Dorsolateral prefrontal cortex (tissue), 120 donors: ENCODE measurements at regions of chr11 and their contacts with region 1.

Region 1: DNA sequence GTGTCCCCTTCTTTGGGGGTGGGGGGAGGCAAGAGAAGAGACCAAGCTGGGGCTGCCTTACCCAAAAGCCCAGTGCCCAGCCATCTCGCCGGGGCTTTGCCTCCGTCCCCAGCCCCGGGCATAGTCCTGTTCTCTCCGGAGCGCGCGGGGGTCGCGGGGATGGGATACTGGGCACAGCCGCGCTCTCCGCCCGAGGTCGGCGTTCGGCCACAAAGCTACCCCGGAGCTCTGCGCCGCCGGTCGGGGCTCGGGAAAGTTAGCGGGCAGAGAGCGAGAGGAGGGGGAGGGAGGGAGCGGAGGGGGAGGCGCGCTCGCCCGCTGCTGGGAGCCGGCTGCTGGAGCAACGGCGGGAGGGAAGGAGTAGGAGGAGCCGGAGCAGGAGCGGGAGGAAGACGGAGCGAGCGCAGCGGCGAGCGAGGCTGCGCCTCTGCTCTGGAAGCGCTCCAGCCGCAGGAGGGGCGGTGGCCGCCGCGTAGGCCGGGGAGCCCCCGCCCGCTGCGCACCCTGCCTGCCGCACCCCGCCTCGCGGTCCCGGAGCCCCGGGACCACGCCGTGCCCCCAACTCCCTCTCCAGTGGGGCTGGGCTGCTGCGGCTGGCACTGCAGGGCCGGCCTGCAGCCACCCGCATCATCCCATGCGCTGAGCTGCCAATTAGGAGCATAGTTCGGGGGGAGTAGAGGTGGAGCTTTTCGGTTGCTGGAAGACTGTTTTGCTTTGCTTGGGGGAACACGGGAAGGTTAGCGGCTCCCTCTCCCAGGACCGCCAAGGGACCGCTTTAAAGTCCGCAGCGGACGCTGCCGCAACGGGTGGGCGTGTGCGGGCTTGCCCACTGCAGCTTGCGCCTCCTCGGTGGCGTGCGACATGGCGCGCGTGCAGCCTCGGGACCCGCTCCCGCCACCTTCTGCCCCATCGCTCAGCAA is at the start of gene SCN4B:
- DNase-seq: peak in 9 of 10 donors; percentile 41 to 82 (median 71)
- H3K4me3 ChIP-seq: peak within 1 kb of the TSS; percentile 46 to 80 (median 66)
- H3K27ac ChIP-seq: peak within 1 kb of the TSS in 11 of 59 donors; percentile 13 to 72 (median 67)
- H3K27me3 ChIP-seq: peaks cover 0 to 12% (median 0%) of the 10 kb centered on the region in 45 donors
- CTCF ChIP-seq: peak in 17 of 56 donors; percentile 9 to 42 (median 26)
- total RNA-seq, gene SCN4B: 16.9 to 139 (median 69.6) TPM

Region 2: GRCh38 chr11:118171269-118172062 is 18.7 kb after region 1 on chr11:
- intact Hi-C with region 1: loop called in 1 of 2 experiments (anchors 2 kb)
- DNase-seq: peak; percentile 77 to 91 (median 88)
- H3K4me3 ChIP-seq: peak overlapping the region in 57 of 59 donors; percentile 1 to 67 (median 53)
- H3K27ac ChIP-seq: peak overlapping the region in 58 of 59 donors; percentile 1 to 93 (median 81)
- H3K27me3 ChIP-seq: no peaks in the 10 kb centered on the region
- CTCF ChIP-seq: peak; percentile 33 to 98 (median 94)

Region 3: GRCh38 chr11:118206391-118207031 is 53.7 kb after region 1 on chr11:
- intact Hi-C with region 1: no loop called
- DNase-seq: no peak
- H3K4me3 ChIP-seq: peak overlapping the region in 1 of 59 donors; percentile 15
- H3K27ac ChIP-seq: peak overlapping the region in 1 of 59 donors; percentile 31
- H3K27me3 ChIP-seq: peaks cover 0 to 52% (median 4%) of the 10 kb centered on the region in 45 donors
- CTCF ChIP-seq: no peak

Region 4: DNA sequence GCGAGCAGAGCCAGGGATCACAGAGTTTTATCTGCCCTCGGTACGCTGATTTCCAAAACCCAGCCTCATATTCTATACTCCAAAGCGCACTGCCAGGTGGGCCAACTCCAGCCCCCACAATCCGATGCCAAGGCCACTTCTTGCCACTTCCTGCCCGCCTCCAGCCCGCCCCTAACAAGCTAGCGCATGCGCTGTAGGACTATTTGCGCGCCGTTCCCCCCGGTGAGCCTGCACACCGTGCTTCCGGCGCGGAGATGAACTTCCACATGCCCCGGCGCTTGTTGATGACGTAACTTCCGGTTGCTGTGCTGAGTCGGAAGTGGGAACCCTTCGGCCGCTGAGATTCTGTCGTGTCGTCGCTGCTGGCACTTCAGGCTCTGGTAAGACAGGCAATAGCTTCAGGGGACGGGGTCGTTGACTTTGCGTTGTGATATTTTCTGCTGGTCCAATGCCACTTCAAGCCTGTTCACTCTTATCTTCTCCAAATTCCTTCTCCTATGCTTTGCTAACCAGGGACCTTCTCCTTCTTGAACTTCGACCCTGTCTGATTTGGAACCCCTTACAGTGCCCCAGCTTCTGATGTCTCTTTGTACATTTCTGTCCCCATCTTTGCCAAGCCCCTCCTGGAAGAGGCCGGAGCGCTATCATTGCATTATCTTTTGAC is 206.6 kb after region 1 on chr11 and contains the start of gene UBE4A:
- intact Hi-C with region 1: loop called in 1 of 2 experiments (anchors 5 kb)
- DNase-seq: peak; percentile 91 to 96 (median 94)
- H3K4me3 ChIP-seq: peak within 1 kb of the TSS; percentile 54 to 99 (median 87)
- H3K27ac ChIP-seq: peak within 1 kb of the TSS in 46 of 59 donors; percentile 10 to 85 (median 54)
- H3K27me3 ChIP-seq: no peaks in the 10 kb centered on the region
- CTCF ChIP-seq: peak in 34 of 56 donors; percentile 4 to 62 (median 34)
- total RNA-seq, gene UBE4A: 41.4 to 68.0 (median 57.4) TPM